Mammary epithelial cell (primary cell): ENCODE measurements at regions of chr3 and their contacts with region 1.

Region 1: DNA sequence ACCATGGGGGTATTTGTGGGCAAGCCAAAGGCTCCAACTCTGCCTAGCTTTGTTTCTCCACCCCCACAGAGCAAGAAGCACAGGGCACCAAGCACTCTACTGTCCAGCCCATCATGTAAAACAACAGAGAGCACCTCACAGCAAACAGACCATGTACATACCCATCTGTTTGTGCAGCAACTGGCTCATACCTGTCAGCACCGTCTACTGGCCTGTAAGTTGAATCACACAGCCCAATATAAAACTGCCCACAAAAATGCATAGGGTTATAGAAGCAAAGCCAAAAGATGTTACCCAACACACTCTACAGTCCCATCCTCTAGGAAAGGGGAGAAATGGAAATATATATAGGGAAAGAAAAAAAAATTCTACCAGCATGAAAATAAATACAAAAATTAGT is 139.7 kb upstream of the CPNE4 start:
- DNase-seq: peak; percentile 66
- H3K4me3 ChIP-seq: no peak overlapping the region
- H3K27ac ChIP-seq: no peak overlapping the region
- H3K4me1 ChIP-seq: peaks cover 4% of the 10 kb centered on the region
- H3K27me3 ChIP-seq: no peaks in the 10 kb centered on the region
- CTCF ChIP-seq: peak; percentile 29 to 62

Region 2: DNA sequence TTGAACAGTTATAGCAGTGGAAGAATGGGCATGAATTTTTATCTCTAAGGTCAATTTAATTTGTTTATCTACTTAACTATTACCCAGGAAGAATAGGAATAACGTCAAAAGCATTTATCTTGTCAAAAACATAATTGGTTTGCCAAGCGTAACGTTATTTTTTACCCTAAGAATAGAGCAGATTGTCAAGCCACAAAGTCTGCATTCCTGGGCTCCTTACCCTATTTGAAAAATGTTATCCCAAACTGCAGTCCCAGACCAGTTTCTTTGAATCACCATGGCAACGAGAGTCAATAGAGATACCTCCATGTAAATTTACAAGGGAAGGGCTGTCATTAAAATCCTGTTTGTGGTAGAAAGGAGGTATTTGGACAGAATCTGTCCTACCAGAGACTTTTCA is 200.8 kb before region 1 on chr3:
- CTCF ChIA-PET with region 1: no interaction called
- dilution Hi-C with region 1: no loop called
- in situ Hi-C with region 1: no loop called
- intact Hi-C with region 1: no loop called
- DNase-seq: no peak
- H3K4me3 ChIP-seq: no peak overlapping the region
- H3K27ac ChIP-seq: no peak overlapping the region
- H3K4me1 ChIP-seq: no peaks in the 10 kb centered on the region
- H3K27me3 ChIP-seq: no peaks in the 10 kb centered on the region
- CTCF ChIP-seq: no peak

Region 3: DNA sequence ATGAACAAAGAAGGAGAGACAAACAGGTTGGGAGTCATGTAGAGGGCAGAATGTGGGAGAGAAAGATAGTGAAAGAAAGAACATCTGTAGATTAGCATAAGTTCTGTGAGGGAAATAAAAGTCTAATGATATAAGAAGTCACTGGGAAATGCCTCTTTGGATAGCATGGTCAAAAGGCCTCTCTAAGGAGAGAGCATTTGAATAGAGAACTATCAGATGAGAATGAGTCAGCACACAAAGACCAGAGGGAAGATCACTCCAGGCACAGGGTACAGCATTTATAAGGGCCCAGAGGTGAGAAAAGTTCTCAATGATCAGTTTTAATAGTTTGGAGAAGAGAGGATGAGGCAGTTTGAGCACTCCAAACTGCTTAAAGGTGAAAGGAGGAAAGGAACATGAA is 131.8 kb before region 1 on chr3:
- CTCF ChIA-PET with region 1: no interaction called
- dilution Hi-C with region 1: no loop called
- in situ Hi-C with region 1: loop called in 1 of 2 experiments (anchors 5 kb)
- intact Hi-C with region 1: loop called (anchors 1 kb)
- DNase-seq: no peak
- H3K4me3 ChIP-seq: no peak overlapping the region
- H3K27ac ChIP-seq: no peak overlapping the region
- H3K4me1 ChIP-seq: no peaks in the 10 kb centered on the region
- H3K27me3 ChIP-seq: no peaks in the 10 kb centered on the region
- CTCF ChIP-seq: no peak

Region 4: DNA sequence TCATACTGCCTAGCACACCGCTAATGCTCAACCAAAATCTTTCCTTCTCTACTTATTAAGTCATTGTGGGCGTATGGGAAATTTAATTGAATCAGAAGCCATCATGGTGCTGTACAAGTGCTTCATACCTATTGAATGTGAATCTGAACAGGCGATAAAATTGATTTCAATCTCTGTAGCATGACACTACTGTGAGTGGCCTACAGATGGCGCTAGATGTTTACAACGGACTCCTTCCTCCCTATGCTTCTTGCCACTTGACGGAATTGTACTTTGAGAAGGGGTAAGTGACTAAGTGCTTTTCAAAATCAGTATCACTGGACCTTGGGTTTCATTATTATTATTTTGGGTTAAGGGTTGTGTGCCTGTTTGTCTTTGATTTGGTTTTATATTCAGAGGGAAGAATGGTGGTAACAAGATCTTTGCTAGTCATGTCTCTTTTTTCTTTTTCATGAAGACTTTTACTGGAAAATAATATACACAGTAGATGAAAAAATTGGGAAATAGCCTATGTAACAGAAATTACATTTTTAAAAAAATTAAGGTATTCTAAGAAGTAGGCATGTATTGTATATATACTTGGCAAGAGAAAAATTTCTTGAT is 178.1 kb after region 1 on chr3:
- CTCF ChIA-PET with region 1: no interaction called
- dilution Hi-C with region 1: no loop called
- in situ Hi-C with region 1: no loop called
- intact Hi-C with region 1: no loop called
- DNase-seq: peak; percentile 53
- H3K4me3 ChIP-seq: no peak overlapping the region
- H3K27ac ChIP-seq: no peak overlapping the region
- H3K4me1 ChIP-seq: peaks cover 3% of the 10 kb centered on the region
- H3K27me3 ChIP-seq: no peaks in the 10 kb centered on the region
- CTCF ChIP-seq: peak; percentile 91 to 92

Region 5: GRCh38 chr3:132522353-132522752 is 347.9 kb after region 1 on chr3:
- CTCF ChIA-PET with region 1: no interaction called
- dilution Hi-C with region 1: no loop called
- in situ Hi-C with region 1: no loop called
- intact Hi-C with region 1: no loop called
- DNase-seq: no peak
- H3K4me3 ChIP-seq: no peak overlapping the region
- H3K27ac ChIP-seq: no peak overlapping the region
- H3K4me1 ChIP-seq: no peaks in the 10 kb centered on the region
- H3K27me3 ChIP-seq: no peaks in the 10 kb centered on the region
- CTCF ChIP-seq: no peak